ENCODE measurements at regions of chr12 and their contacts with region 1.

Region 1: GRCh38 chr12:105053116-105053572 is 31.1 kb downstream of the ALDH1L2 start:
- DNase-seq: peak; percentile 75 to 80
- ATAC-seq: peak; percentile 88
- H3K4me3 ChIP-seq: no peak overlapping the region
- H3K27ac ChIP-seq: no peak overlapping the region
- H3K4me1 ChIP-seq: no peaks in the 10 kb centered on the region
- H3K27me3 ChIP-seq: no peaks in the 10 kb centered on the region

Region 2: GRCh38 chr12:104381731-104382480 is 671.2 kb before region 1 on chr12:
- intact Hi-C with region 1: loop called (anchors 2 to 5 kb)
- DNase-seq: peak; percentile 78 to 90
- ATAC-seq: peak; percentile 91
- H3K4me3 ChIP-seq: no peak overlapping the region
- H3K27ac ChIP-seq: no peak overlapping the region
- H3K4me1 ChIP-seq: no peaks in the 10 kb centered on the region
- H3K27me3 ChIP-seq: no peaks in the 10 kb centered on the region

Region 3: GRCh38 chr12:104870797-104871196 is 182.3 kb before region 1 on chr12:
- intact Hi-C with region 1: loop called in 1 of 2 experiments (anchors 5 kb)
- DNase-seq: no peak
- ATAC-seq: no peak
- H3K4me3 ChIP-seq: no peak overlapping the region
- H3K27ac ChIP-seq: no peak overlapping the region
- H3K4me1 ChIP-seq: no peaks in the 10 kb centered on the region
- H3K27me3 ChIP-seq: no peaks in the 10 kb centered on the region